Activated naive CD4-positive, alpha-beta T cell treated with anti-CD3 and anti-CD28 coated beads for 36 hours (primary cell): ENCODE measurements at regions of chr14 and their contacts with region 1.

Region 1: DNA sequence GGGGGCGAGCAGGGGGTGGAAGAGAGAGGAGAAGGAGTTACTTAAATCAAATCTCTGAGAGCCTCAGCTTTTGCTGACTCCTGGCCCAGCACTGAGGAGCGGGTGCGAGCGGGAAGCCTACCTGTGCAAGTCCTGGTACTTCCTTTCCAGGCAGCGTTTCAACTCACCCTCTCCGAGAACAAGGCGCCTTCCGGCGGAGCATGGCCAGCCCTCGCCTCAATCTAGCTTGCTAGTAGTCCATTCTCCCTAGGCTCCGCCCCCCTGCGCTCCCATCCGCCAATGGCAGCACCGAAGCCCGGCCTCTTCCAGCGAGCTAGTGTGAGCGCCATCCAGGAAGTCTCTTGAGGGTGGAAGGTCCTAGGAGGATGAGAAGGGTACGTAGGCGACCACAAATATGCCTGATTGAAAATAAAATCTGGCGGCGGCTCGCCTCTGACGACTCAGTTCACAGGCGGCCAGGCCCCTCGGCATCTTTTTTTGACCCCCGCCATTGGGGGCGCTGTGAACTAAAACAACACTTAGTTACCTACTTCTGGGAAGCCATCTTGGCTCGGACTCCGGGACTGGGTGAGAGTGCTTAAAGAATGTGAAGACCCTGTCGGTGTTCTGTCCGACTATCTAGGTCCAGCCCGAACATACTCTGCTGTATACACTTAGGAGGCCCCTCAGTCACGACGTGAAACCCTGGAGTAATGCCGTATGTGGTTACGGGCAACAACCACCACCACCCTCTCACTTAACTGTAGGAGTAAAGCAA is at the start of gene CHD8:
- DNase-seq: peak; percentile 100
- H3K4me3 Mint-ChIP-seq: peak within 1 kb of the TSS; percentile 91
- H3K27ac Mint-ChIP-seq: peak within 1 kb of the TSS; percentile 98
- H3K4me1 Mint-ChIP-seq: peaks cover 37% of the 10 kb centered on the region
- H3K27me3 Mint-ChIP-seq: no peaks in the 10 kb centered on the region
- total RNA-seq, gene CHD8: 73.9 to 75.5 TPM

Region 2: DNA sequence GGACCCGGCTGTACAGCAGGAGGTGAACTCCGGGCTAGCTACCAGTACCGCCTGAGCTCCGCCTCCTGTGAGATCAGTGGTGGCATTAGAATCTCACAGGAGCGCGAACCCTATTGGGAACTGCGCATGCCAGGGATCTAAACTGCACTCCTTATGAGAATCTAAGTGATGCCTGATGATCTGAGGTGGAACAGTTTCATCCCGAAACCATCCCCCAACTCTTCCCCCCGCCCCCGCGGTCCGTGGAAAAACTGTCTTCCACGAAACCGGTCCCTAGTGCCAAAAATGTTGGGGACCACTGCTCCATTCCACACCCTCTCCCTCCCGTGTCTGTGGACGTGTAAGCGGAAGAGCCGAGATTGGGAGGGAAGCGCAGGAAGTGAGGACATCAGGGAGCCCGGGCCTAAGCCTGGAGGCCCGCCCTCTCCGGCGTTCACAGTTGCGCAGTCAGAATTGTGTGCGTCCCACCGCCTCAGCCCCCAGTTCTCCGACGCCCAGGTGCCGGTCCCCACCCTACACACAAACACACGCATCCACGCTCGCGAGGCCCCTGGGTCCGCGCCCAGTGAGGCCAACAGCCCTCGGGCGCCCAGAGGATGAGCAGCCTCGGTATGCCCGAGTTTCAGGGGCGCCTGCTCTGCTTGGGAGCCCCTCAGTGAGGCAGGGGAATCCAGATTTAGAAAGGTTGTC is 773.5 kb before region 1 on chr14:
- CTCF ChIA-PET with region 1: no interaction called
- intact Hi-C with region 1: loop called (anchors 10 kb)
- DNase-seq: peak; percentile 81
- H3K4me3 Mint-ChIP-seq: no peak overlapping the region
- H3K27ac Mint-ChIP-seq: no peak overlapping the region
- H3K4me1 Mint-ChIP-seq: peaks cover 22% of the 10 kb centered on the region
- H3K27me3 Mint-ChIP-seq: no peaks in the 10 kb centered on the region

Region 3: DNA sequence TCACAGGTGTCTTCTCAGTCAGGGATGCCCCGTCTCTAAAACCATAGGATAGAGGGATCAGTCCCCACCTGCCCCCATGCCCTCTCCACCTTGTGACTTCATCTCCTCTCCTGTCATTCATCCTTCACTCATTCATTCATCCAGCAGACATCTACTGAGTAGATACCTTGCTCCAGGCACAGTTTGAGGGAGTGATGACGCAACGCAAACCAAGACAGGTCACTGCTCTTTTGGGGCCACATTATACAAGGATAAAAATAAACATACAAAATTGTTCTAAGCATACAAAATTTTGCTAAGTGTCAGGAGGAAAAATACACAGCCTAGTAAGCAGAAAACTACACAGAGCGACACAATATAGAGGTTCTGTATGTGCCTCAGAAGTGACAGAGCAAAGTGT is 533.6 kb before region 1 on chr14:
- CTCF ChIA-PET with region 1: no interaction called
- intact Hi-C with region 1: no loop called
- DNase-seq: no peak
- H3K4me3 Mint-ChIP-seq: no peak overlapping the region
- H3K27ac Mint-ChIP-seq: no peak overlapping the region
- H3K4me1 Mint-ChIP-seq: no peaks in the 10 kb centered on the region
- H3K27me3 Mint-ChIP-seq: peaks cover 40% of the 10 kb centered on the region

Region 4: GRCh38 chr14:21383848-21384493 is 72.1 kb before region 1 on chr14 and contains the start of gene SUPT16H:
- CTCF ChIA-PET with region 1: interaction called, 4 read pairs
- intact Hi-C with region 1: loop called (anchors 1 kb)
- DNase-seq: peak; percentile 97
- H3K4me3 Mint-ChIP-seq: peak within 1 kb of the TSS; percentile 98
- H3K27ac Mint-ChIP-seq: peak within 1 kb of the TSS; percentile 99
- H3K4me1 Mint-ChIP-seq: peaks cover 34% of the 10 kb centered on the region
- H3K27me3 Mint-ChIP-seq: no peaks in the 10 kb centered on the region
- total RNA-seq, gene SUPT16H: 164 to 165 TPM

Region 5: DNA sequence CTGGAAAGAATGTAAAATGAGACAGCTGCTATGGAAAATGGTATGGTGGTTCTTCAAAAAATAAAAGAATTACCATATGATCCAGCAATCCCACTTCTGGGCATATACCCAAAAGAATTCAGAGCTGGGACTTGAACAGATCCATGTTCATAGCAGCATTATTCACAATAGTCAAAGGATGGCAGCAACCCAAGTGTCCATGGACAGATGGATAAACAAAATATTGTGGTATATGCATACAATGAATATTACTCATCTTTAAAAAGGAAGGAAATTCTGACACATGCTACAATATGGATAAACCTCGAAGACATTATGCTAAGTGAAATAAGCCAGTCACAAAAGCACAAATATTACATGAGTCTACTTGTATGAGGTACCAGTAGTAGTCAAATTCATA is 11.5 kb after region 1 on chr14:
- CTCF ChIA-PET with region 1: interaction called, 13 read pairs
- intact Hi-C with region 1: no loop called
- DNase-seq: no peak
- H3K4me3 Mint-ChIP-seq: no peak overlapping the region
- H3K27ac Mint-ChIP-seq: no peak overlapping the region
- H3K4me1 Mint-ChIP-seq: peaks cover 2% of the 10 kb centered on the region
- H3K27me3 Mint-ChIP-seq: no peaks in the 10 kb centered on the region

Region 6: GRCh38 chr14:21510735-21511657 is 54.9 kb after region 1 on chr14 and contains the start of gene METTL3:
- CTCF ChIA-PET with region 1: interaction called, 10 read pairs
- intact Hi-C with region 1: loop called (anchors 1 kb)
- DNase-seq: peak; percentile 96
- H3K4me3 Mint-ChIP-seq: peak within 1 kb of the TSS; percentile 96
- H3K27ac Mint-ChIP-seq: peak within 1 kb of the TSS; percentile 96
- H3K4me1 Mint-ChIP-seq: peaks cover 30% of the 10 kb centered on the region
- H3K27me3 Mint-ChIP-seq: no peaks in the 10 kb centered on the region
- total RNA-seq, gene METTL3: 60.6 TPM

Region 7: GRCh38 chr14:22519877-22520685 is 1064.0 kb after region 1 on chr14:
- CTCF ChIA-PET with region 1: no interaction called
- intact Hi-C with region 1: loop called (anchors 5 kb)
- DNase-seq: no peak
- H3K4me3 Mint-ChIP-seq: peak overlapping the region; percentile 91
- H3K27ac Mint-ChIP-seq: peak overlapping the region; percentile 98
- H3K4me1 Mint-ChIP-seq: peaks cover 86% of the 10 kb centered on the region
- H3K27me3 Mint-ChIP-seq: no peaks in the 10 kb centered on the region